CD4-positive, alpha-beta T cell (primary cell): ENCODE measurements at regions of chr21 and their contacts with region 1.

Region 1: GRCh38 chr21:33199516-33200217 is 30.1 kb upstream of the IFNAR2 start:
- DNase-seq: peak; percentile 63 to 93 (median 75)
- ATAC-seq: peak; percentile 93
- H3K4me3 ChIP-seq: no peak overlapping the region
- H3K4me3 Mint-ChIP-seq: no peak overlapping the region
- H3K27ac ChIP-seq: no peak overlapping the region
- H3K27ac Mint-ChIP-seq: peak overlapping the region; percentile 79
- H3K4me1 ChIP-seq: peaks cover 21% of the 10 kb centered on the region
- H3K4me1 Mint-ChIP-seq: peaks cover 55% of the 10 kb centered on the region
- H3K27me3 ChIP-seq: no peaks in the 10 kb centered on the region
- H3K27me3 Mint-ChIP-seq: no peaks in the 10 kb centered on the region
- CTCF ChIP-seq: peak; percentile 75

Region 2: GRCh38 chr21:32653311-32653901 is 546.3 kb before region 1 on chr21:
- CTCF ChIA-PET with region 1: no interaction called
- POLR2A ChIA-PET with region 1: no interaction called
- intact Hi-C with region 1: loop called in 1 of 2 experiments (anchors 10 kb)
- DNase-seq: peak in 8 of 14 experiments; percentile 4 to 60 (median 22)
- ATAC-seq: peak; percentile 62
- H3K4me3 ChIP-seq: no peak overlapping the region
- H3K4me3 Mint-ChIP-seq: no peak overlapping the region
- H3K27ac ChIP-seq: no peak overlapping the region
- H3K27ac Mint-ChIP-seq: no peak overlapping the region
- H3K4me1 ChIP-seq: no peaks in the 10 kb centered on the region
- H3K4me1 Mint-ChIP-seq: peaks cover 5% of the 10 kb centered on the region
- H3K27me3 ChIP-seq: no peaks in the 10 kb centered on the region
- H3K27me3 Mint-ChIP-seq: no peaks in the 10 kb centered on the region
- CTCF ChIP-seq: peak; percentile 68

Region 3: DNA sequence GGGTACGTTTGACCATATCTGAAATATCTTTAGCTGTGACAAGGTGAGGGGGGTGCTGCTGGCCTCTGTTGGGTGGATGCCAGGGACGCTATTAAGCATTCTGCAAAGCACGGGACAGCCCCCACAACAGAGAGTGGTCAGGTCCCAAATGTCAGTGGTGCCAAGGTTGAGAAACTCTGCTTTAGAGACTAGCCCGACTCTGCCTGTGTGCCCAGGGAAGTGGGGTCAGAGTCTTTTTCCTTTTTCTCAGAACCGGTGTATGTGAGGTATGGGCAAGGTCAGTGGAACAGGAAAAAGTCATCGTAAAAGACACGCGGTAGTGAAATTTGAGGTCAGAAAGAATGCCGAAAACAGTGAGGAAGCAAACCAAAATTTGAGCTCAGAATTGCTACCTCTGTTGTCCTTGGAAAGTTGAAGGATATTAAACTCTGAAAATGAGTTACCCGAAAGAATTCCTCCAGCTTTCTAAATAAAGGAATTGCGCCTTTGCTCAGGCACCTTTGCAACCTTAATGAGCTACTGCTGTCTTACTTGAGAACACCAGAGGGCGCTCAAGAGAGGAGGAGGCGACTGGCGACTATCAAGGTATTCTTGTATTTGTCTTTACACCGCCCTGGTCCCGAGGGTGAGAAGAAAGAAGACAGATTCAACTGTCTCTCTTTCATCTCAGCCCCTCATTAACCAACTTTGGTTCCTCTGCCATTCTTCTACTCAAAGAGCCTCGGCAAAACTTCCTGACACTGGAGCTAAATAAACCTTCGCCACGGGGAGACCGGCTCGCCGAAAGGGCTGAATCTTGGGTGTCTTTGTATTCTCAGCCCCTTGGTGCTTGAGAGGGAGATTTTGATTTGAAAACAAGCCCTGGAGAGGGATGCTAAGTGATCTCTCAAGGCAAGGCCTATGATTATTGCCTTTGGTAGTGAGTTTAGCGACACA is 259.3 kb before region 1 on chr21:
- CTCF ChIA-PET with region 1: interaction called, 11 read pairs
- POLR2A ChIA-PET with region 1: interaction called, 4 read pairs
- intact Hi-C with region 1: loop called (anchors 1 kb)
- DNase-seq: peak in 12 of 14 experiments; percentile 7 to 79 (median 20)
- ATAC-seq: peak; percentile 61
- H3K4me3 ChIP-seq: no peak overlapping the region
- H3K4me3 Mint-ChIP-seq: no peak overlapping the region
- H3K27ac ChIP-seq: no peak overlapping the region
- H3K27ac Mint-ChIP-seq: no peak overlapping the region
- H3K4me1 ChIP-seq: no peaks in the 10 kb centered on the region
- H3K4me1 Mint-ChIP-seq: no peaks in the 10 kb centered on the region
- H3K27me3 ChIP-seq: no peaks in the 10 kb centered on the region
- H3K27me3 Mint-ChIP-seq: no peaks in the 10 kb centered on the region
- CTCF ChIP-seq: peak; percentile 82

Region 4: GRCh38 chr21:33185852-33186251 is 13.8 kb before region 1 on chr21:
- CTCF ChIA-PET with region 1: interaction called, 5 read pairs
- POLR2A ChIA-PET with region 1: interaction called, 11 read pairs
- intact Hi-C with region 1: no loop called
- DNase-seq: peak in 6 of 14 experiments; percentile 17 to 83 (median 57)
- ATAC-seq: peak; percentile 94
- H3K4me3 ChIP-seq: no peak overlapping the region
- H3K4me3 Mint-ChIP-seq: peak overlapping the region; percentile 49
- H3K27ac ChIP-seq: peak overlapping the region; percentile 45 to 73
- H3K27ac Mint-ChIP-seq: peak overlapping the region; percentile 76
- H3K4me1 ChIP-seq: peaks cover 20% of the 10 kb centered on the region
- H3K4me1 Mint-ChIP-seq: peaks cover 68% of the 10 kb centered on the region
- H3K27me3 ChIP-seq: no peaks in the 10 kb centered on the region
- H3K27me3 Mint-ChIP-seq: no peaks in the 10 kb centered on the region
- CTCF ChIP-seq: no peak

Region 5: DNA sequence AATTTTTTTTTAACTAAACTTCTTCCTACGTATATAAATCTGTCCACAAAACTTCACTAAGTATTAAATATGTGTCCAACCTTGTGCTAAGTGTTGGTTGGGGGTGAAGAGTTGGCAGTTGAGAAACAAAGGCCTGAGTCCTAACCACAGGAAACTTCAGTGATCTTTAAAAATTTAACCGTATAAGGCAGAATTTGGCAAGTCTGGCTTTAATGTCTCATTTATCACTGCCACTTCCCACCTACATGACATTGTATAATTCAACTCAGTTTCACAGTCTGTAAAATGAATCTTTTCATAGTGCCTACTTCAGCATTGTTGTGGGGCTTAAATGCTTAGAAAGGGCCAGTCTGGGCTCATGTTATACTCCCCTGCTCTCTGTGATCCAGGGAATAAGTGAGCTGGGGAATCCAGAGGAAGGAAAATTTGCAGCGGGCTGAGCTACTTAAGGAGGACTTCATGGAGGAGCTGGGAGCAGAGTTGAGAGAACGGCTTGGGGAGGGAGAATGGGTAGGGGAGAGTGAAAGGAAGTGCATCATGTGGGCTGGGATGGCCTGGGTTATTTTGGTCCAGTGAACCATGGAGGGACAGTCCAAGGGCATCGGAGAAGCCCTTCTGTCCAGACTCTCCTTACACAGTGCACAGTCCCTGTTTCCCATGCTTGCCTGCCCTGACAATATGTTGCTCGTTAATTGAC is 44.6 kb after region 1 on chr21:
- CTCF ChIA-PET with region 1: interaction called, 11 read pairs
- POLR2A ChIA-PET with region 1: interaction called, 4 read pairs
- intact Hi-C with region 1: loop called (anchors 5 to 10 kb)
- DNase-seq: peak in 1 of 14 experiments; percentile 46
- ATAC-seq: peak; percentile 30
- H3K4me3 ChIP-seq: peak overlapping the region; percentile 12
- H3K4me3 Mint-ChIP-seq: peak overlapping the region; percentile 77
- H3K27ac ChIP-seq: peak overlapping the region; percentile 8 to 50
- H3K27ac Mint-ChIP-seq: peak overlapping the region; percentile 89
- H3K4me1 ChIP-seq: peaks cover 63% of the 10 kb centered on the region
- H3K4me1 Mint-ChIP-seq: peaks cover 89% of the 10 kb centered on the region
- H3K27me3 ChIP-seq: no peaks in the 10 kb centered on the region
- H3K27me3 Mint-ChIP-seq: no peaks in the 10 kb centered on the region
- CTCF ChIP-seq: no peak

Region 6: GRCh38 chr21:33324291-33325221 is 124.9 kb after region 1 on chr21 and contains the start of gene IFNAR1:
- CTCF ChIA-PET with region 1: interaction called, 14 read pairs
- POLR2A ChIA-PET with region 1: interaction called, 11 read pairs
- intact Hi-C with region 1: loop called in 1 of 2 experiments (anchors 5 kb)
- DNase-seq: peak; percentile 98 to 100 (median 99)
- ATAC-seq: peak; percentile 87
- H3K4me3 ChIP-seq: peak within 1 kb of the TSS; percentile 90
- H3K4me3 Mint-ChIP-seq: no peak within 1 kb of the TSS
- H3K27ac ChIP-seq: peak within 1 kb of the TSS; percentile 95 to 99
- H3K27ac Mint-ChIP-seq: no peak within 1 kb of the TSS
- H3K4me1 ChIP-seq: peaks cover 29% of the 10 kb centered on the region
- H3K4me1 Mint-ChIP-seq: peaks cover 31% of the 10 kb centered on the region
- H3K27me3 ChIP-seq: no peaks in the 10 kb centered on the region
- H3K27me3 Mint-ChIP-seq: no peaks in the 10 kb centered on the region
- CTCF ChIP-seq: no peak
- total RNA-seq, gene IFNAR1: 20.4 to 26.8 TPM

Region 7: GRCh38 chr21:33374450-33375096 is 174.9 kb after region 1 on chr21:
- CTCF ChIA-PET with region 1: interaction called, 4 read pairs
- POLR2A ChIA-PET with region 1: no interaction called
- intact Hi-C with region 1: loop called (anchors 1 kb)
- DNase-seq: peak; percentile 40 to 81 (median 54)
- ATAC-seq: peak; percentile 87
- H3K4me3 ChIP-seq: no peak overlapping the region
- H3K4me3 Mint-ChIP-seq: no peak overlapping the region
- H3K27ac ChIP-seq: no peak overlapping the region
- H3K27ac Mint-ChIP-seq: no peak overlapping the region
- H3K4me1 ChIP-seq: peaks cover 16% of the 10 kb centered on the region
- H3K4me1 Mint-ChIP-seq: peaks cover 7% of the 10 kb centered on the region
- H3K27me3 ChIP-seq: no peaks in the 10 kb centered on the region
- H3K27me3 Mint-ChIP-seq: no peaks in the 10 kb centered on the region
- CTCF ChIP-seq: peak; percentile 77